CD4-positive, alpha-beta memory T cell (primary cell): ENCODE measurements at regions of chr15 and their contacts with region 1.

Region 1: GRCh38 chr15:84929744-84930371 is 45.4 kb downstream of the SLC28A1 start:
- DNase-seq: no peak
- H3K4me3 ChIP-seq: no peak overlapping the region
- H3K4me3 Mint-ChIP-seq: no peak overlapping the region
- H3K27ac ChIP-seq: no peak overlapping the region
- H3K27ac Mint-ChIP-seq: peak overlapping the region in 1 of 7 donors; percentile 68
- H3K4me1 ChIP-seq: no peaks in the 10 kb centered on the region
- H3K4me1 Mint-ChIP-seq: peaks cover 4 to 6% (median 5%) of the 10 kb centered on the region in 4 donors
- H3K27me3 ChIP-seq: no peaks in the 10 kb centered on the region
- H3K27me3 Mint-ChIP-seq: no peaks in the 10 kb centered on the region

Region 2: GRCh38 chr15:84844964-84845363 is 84.9 kb before region 1 on chr15:
- CTCF ChIA-PET with region 1: interaction called, 4 read pairs
- POLR2A ChIA-PET with region 1: no interaction called
- intact Hi-C with region 1: loop called (anchors 1 kb)
- DNase-seq: no peak
- H3K4me3 ChIP-seq: no peak overlapping the region
- H3K4me3 Mint-ChIP-seq: no peak overlapping the region
- H3K27ac ChIP-seq: no peak overlapping the region
- H3K27ac Mint-ChIP-seq: no peak overlapping the region
- H3K4me1 ChIP-seq: no peaks in the 10 kb centered on the region
- H3K4me1 Mint-ChIP-seq: no peaks in the 10 kb centered on the region
- H3K27me3 ChIP-seq: no peaks in the 10 kb centered on the region
- H3K27me3 Mint-ChIP-seq: no peaks in the 10 kb centered on the region

Region 3: DNA sequence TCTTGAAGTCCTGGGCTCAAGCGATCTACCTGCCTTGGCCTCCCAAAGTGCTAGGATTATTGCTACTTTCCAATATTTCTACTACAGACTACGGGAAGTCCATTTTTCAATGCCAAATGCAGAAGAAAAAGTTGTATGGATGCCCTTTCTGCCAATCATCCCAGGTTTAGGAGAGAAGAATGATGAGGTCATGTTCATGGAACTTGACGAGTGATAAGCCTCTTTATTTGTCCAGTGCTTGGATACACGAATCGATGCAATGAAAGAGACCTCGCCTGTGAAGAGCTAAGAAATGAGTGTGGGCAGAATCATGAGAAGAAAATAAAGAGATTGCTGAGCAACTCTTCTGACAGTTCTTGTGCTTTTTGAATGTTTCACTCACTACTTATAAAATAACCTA is 46.4 kb before region 1 on chr15:
- CTCF ChIA-PET with region 1: interaction called, 5 read pairs
- POLR2A ChIA-PET with region 1: no interaction called
- intact Hi-C with region 1: loop called (anchors 1 kb)
- DNase-seq: no peak
- H3K4me3 ChIP-seq: no peak overlapping the region
- H3K4me3 Mint-ChIP-seq: no peak overlapping the region
- H3K27ac ChIP-seq: no peak overlapping the region
- H3K27ac Mint-ChIP-seq: no peak overlapping the region
- H3K4me1 ChIP-seq: no peaks in the 10 kb centered on the region
- H3K4me1 Mint-ChIP-seq: no peaks in the 10 kb centered on the region
- H3K27me3 ChIP-seq: no peaks in the 10 kb centered on the region
- H3K27me3 Mint-ChIP-seq: no peaks in the 10 kb centered on the region